HepG2 (cell line): ENCODE measurements at regions of chr3 and their contacts with region 1.

Region 1: DNA sequence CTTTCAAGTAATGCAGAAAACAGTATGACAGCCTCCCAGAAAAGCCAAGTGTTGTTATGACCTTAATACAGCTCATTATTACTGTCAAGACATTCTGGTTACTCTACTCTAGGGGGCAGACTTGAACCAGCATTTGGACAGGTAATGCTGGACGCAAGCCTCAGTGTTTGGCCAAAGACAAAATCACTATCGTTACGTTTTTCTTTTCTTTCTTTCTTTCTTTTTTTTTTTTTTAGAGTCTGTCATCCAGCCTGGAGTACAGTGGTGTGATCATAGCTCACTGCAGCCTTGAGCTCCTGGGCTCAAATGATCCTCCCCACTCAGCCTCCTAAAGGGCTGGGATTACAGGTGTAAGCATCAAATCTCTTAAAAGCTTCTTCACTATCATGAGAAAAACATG is 29.4 kb upstream of the TMEM45A start:
- DNase-seq: peak; percentile 54
- ATAC-seq: peak; percentile 94
- H3K4me3 ChIP-seq: no peak overlapping the region
- H3K27ac ChIP-seq: no peak overlapping the region
- H3K4me1 ChIP-seq: no peaks in the 10 kb centered on the region
- H3K27me3 ChIP-seq: no peaks in the 10 kb centered on the region
- CTCF ChIP-seq: peak; percentile 89
- EP300 ChIP-seq: no peak
- POLR2A ChIP-seq: no peak
- RAD21 ChIP-seq: peak; percentile 70

Region 2: DNA sequence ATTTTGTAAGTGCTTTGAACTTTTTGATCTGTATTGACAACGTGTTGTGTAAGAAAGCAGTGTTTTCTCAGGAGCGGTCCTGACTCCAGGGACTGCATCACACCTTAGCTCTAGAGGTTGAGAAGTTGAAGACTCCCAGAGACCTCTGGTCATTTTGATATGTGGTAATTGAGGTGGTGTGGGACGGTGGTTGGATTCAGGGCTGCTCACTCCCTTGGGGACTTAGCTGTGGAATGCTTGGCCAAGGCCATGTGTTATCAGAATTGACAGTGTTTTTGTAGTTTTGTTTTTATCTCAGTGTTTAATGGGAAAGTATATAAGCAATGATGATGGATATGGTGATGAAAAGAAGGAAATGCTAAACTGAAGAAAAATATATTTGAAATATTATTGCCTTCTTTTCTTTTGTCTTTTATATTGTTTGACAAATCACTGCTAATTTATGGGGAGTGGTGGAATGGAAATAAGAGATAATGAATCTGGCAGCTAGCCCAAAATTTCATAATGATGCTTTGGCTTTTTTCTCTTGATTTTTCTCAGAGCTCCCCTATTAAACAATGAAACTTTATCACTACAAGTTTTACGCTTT is 629.3 kb before region 1 on chr3:
- CTCF ChIA-PET with region 1: no interaction called
- POLR2A ChIA-PET with region 1: no interaction called
- in situ Hi-C with region 1: no loop called
- intact Hi-C with region 1: loop called (anchors 2 kb)
- DNase-seq: no peak
- ATAC-seq: no peak
- H3K4me3 ChIP-seq: no peak overlapping the region
- H3K27ac ChIP-seq: no peak overlapping the region
- H3K4me1 ChIP-seq: peaks cover 28% of the 10 kb centered on the region
- H3K27me3 ChIP-seq: no peaks in the 10 kb centered on the region
- CTCF ChIP-seq: no peak
- EP300 ChIP-seq: no peak
- POLR2A ChIP-seq: no peak
- RAD21 ChIP-seq: no peak

Region 3: GRCh38 chr3:100492059-100493006 is 29.3 kb after region 1 on chr3 and contains the start of gene TMEM45A:
- CTCF ChIA-PET with region 1: no interaction called
- POLR2A ChIA-PET with region 1: interaction called, 3 read pairs
- in situ Hi-C with region 1: no loop called
- intact Hi-C with region 1: loop called (anchors 1 kb)
- DNase-seq: peak; percentile 88
- ATAC-seq: peak; percentile 99
- H3K4me3 ChIP-seq: peak within 1 kb of the TSS; percentile 68 to 79 (median 79)
- H3K27ac ChIP-seq: peak within 1 kb of the TSS; percentile 65
- H3K4me1 ChIP-seq: peaks cover 45% of the 10 kb centered on the region
- H3K27me3 ChIP-seq: peaks cover 0 to 15% of the 10 kb centered on the region in 2 experiments; a peak in 2 of 5 replicates
- CTCF ChIP-seq: peak; percentile 30; the same call in 1 of the 2 replicates
- EP300 ChIP-seq: no peak
- POLR2A ChIP-seq: peak; percentile 76 to 86
- RAD21 ChIP-seq: no peak
- total RNA-seq, gene TMEM45A: 11.7 and 14.8 TPM in 2 replicates

Region 4: DNA sequence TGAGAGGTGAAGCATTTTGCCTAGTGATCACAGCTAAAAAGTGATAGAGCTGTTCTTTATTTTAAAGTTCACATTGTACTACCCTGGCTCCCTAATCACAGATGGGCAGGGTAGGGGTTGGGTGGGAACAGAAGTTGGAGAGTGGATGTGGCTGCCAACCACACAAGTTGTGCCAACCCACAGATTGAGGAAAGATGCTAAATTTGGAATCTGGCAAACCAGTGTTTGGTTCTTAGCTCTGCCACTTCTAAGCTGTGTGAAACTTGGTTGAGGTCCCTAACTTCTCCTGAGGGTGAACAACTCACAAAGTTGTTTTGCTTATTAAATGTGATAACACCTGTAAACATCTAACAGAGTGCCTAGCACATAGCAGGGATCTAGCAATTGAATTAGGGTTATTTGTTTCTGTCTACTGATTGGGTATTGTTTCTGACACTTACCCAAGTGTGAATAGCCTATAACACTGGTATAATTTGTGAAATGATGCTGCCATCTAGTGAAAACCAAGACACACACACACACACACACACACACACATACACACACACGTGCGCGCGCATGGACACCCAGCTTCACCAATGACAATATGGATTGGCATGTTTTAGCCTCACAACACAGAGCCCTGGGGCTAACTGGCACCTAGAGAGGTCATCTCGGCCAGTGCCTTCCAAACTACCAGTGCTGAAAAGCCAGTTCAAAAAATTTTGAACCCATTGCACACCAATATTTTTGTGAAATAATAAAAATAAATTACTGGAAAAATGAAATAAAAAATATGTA is 171.7 kb after region 1 on chr3:
- CTCF ChIA-PET with region 1: no interaction called
- POLR2A ChIA-PET with region 1: no interaction called
- in situ Hi-C with region 1: no loop called
- intact Hi-C with region 1: loop called (anchors 1 kb)
- DNase-seq: peak; percentile 38
- ATAC-seq: peak; percentile 85
- H3K4me3 ChIP-seq: peak overlapping the region in 2 of 3 experiments; percentile 43 to 49; a peak in 1 of 6 replicates
- H3K27ac ChIP-seq: no peak overlapping the region
- H3K4me1 ChIP-seq: peaks cover 18% of the 10 kb centered on the region
- H3K27me3 ChIP-seq: no peaks in the 10 kb centered on the region
- CTCF ChIP-seq: peak; percentile 90
- EP300 ChIP-seq: no peak
- POLR2A ChIP-seq: no peak
- RAD21 ChIP-seq: peak; percentile 32; the same call in 1 of the 2 replicates

Region 5: GRCh38 chr3:100796556-100796955 is 333.6 kb after region 1 on chr3:
- CTCF ChIA-PET with region 1: no interaction called
- POLR2A ChIA-PET with region 1: no interaction called
- in situ Hi-C with region 1: no loop called
- intact Hi-C with region 1: loop called (anchors 1 kb)
- DNase-seq: no peak
- ATAC-seq: no peak
- H3K4me3 ChIP-seq: no peak overlapping the region
- H3K27ac ChIP-seq: no peak overlapping the region
- H3K4me1 ChIP-seq: no peaks in the 10 kb centered on the region
- H3K27me3 ChIP-seq: no peaks in the 10 kb centered on the region
- CTCF ChIP-seq: peak; percentile 43
- EP300 ChIP-seq: no peak
- POLR2A ChIP-seq: no peak
- RAD21 ChIP-seq: no peak